Activated naive CD8-positive, alpha-beta T cell treated with anti-CD3 and anti-CD28 coated beads, Interleukin-2, amount 10 ng/mL, durations not matched to agents 7 days and 5 days (primary cell): ENCODE measurements at regions of chr10 and their contacts with region 1.

Region 1: GRCh38 chr10:6202684-6203330 is at the start of gene PFKFB3:
- DNase-seq: peak; percentile 98
- ATAC-seq: peak; percentile 63
- H3K4me3 Mint-ChIP-seq: peak within 1 kb of the TSS; percentile 100
- H3K27ac Mint-ChIP-seq: peak within 1 kb of the TSS; percentile 97
- H3K4me1 Mint-ChIP-seq: peaks cover 36% of the 10 kb centered on the region
- H3K27me3 Mint-ChIP-seq: no peaks in the 10 kb centered on the region
- total RNA-seq, gene PFKFB3: 75.1 to 77.2 TPM

Region 2: DNA sequence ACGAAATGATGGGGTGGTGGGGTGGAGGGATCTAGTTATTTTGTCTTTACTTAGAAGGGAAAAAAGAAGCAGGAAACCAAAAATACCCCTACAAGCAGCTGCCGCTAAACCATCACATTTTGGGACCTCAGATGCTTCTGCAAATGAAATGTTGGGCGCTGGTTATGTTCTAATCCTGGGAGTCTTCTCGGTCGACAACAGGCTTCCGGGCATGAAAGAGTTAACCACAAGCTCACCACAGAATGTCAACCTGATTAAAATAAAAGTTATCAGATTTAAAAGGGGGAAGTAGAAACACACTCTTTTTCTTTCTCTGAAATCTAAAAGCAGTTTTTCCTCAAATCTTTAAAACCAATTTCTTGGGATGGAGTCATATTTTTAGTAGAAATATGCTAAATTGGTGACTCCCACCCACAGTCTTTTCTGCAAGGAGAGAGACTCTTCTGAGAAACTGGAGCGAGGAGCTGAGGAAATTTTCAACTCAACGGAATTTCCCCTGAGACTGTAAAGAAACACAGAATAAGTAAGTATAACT is 157.4 kb before region 1 on chr10:
- POLR2A ChIA-PET with region 1: no interaction called
- DNase-seq: peak; percentile 35
- ATAC-seq: peak; percentile 32
- H3K4me3 Mint-ChIP-seq: peak overlapping the region; percentile 79
- H3K27ac Mint-ChIP-seq: peak overlapping the region; percentile 79
- H3K4me1 Mint-ChIP-seq: peaks cover 79% of the 10 kb centered on the region
- H3K27me3 Mint-ChIP-seq: no peaks in the 10 kb centered on the region

Region 3: GRCh38 chr10:6163364-6164270 is 39.2 kb before region 1 on chr10:
- POLR2A ChIA-PET with region 1: interaction called, 16 read pairs
- DNase-seq: peak; percentile 99
- ATAC-seq: peak; percentile 97
- H3K4me3 Mint-ChIP-seq: peak overlapping the region; percentile 93
- H3K27ac Mint-ChIP-seq: peak overlapping the region; percentile 92
- H3K4me1 Mint-ChIP-seq: peaks cover 34% of the 10 kb centered on the region
- H3K27me3 Mint-ChIP-seq: no peaks in the 10 kb centered on the region

Region 4: GRCh38 chr10:6171881-6172695 is 30.7 kb before region 1 on chr10:
- POLR2A ChIA-PET with region 1: interaction called, 32 read pairs
- DNase-seq: no peak
- ATAC-seq: no peak
- H3K4me3 Mint-ChIP-seq: peak overlapping the region; percentile 13
- H3K27ac Mint-ChIP-seq: peak overlapping the region; percentile 27
- H3K4me1 Mint-ChIP-seq: peaks cover 58% of the 10 kb centered on the region
- H3K27me3 Mint-ChIP-seq: no peaks in the 10 kb centered on the region

Region 5: DNA sequence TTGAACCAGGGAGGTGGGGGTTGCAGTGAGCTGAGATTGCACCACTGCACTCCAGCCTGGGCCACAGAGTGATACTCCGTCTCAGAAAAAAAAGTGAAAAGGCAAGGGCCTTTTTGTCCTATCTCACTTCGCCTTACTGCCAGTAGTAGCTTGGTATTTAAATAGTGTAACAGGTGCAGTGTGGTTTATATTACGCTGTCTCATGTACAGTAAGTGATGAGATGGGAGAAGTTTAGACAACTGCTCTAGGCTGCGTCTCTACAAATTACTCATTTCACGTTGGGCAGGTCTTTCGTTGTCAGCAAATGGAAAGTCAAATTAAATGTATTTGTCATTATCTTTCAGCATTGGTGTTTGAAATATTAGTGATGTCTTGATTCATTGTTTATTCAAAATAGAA is 15.5 kb before region 1 on chr10:
- POLR2A ChIA-PET with region 1: no interaction called
- DNase-seq: no peak
- ATAC-seq: no peak
- H3K4me3 Mint-ChIP-seq: no peak overlapping the region
- H3K27ac Mint-ChIP-seq: no peak overlapping the region
- H3K4me1 Mint-ChIP-seq: peaks cover 30% of the 10 kb centered on the region
- H3K27me3 Mint-ChIP-seq: no peaks in the 10 kb centered on the region

Region 6: GRCh38 chr10:6247041-6247712 is 44.4 kb after region 1 on chr10:
- POLR2A ChIA-PET with region 1: no interaction called
- DNase-seq: no peak
- ATAC-seq: no peak
- H3K4me3 Mint-ChIP-seq: no peak overlapping the region
- H3K27ac Mint-ChIP-seq: no peak overlapping the region
- H3K4me1 Mint-ChIP-seq: peaks cover 3% of the 10 kb centered on the region
- H3K27me3 Mint-ChIP-seq: no peaks in the 10 kb centered on the region

Region 7: GRCh38 chr10:6348096-6348874 is 145.5 kb after region 1 on chr10:
- POLR2A ChIA-PET with region 1: interaction called, 19 read pairs
- DNase-seq: peak; percentile 72
- ATAC-seq: peak; percentile 88
- H3K4me3 Mint-ChIP-seq: peak overlapping the region; percentile 82
- H3K27ac Mint-ChIP-seq: peak overlapping the region; percentile 98
- H3K4me1 Mint-ChIP-seq: peaks cover 54% of the 10 kb centered on the region
- H3K27me3 Mint-ChIP-seq: no peaks in the 10 kb centered on the region

Region 8: GRCh38 chr10:6401562-6402348 is 198.9 kb after region 1 on chr10:
- POLR2A ChIA-PET with region 1: interaction called, 38 read pairs
- DNase-seq: no peak
- ATAC-seq: peak; percentile 79
- H3K4me3 Mint-ChIP-seq: peak overlapping the region; percentile 55
- H3K27ac Mint-ChIP-seq: no peak overlapping the region
- H3K4me1 Mint-ChIP-seq: peaks cover 33% of the 10 kb centered on the region
- H3K27me3 Mint-ChIP-seq: peaks cover 7% of the 10 kb centered on the region

Region 9: DNA sequence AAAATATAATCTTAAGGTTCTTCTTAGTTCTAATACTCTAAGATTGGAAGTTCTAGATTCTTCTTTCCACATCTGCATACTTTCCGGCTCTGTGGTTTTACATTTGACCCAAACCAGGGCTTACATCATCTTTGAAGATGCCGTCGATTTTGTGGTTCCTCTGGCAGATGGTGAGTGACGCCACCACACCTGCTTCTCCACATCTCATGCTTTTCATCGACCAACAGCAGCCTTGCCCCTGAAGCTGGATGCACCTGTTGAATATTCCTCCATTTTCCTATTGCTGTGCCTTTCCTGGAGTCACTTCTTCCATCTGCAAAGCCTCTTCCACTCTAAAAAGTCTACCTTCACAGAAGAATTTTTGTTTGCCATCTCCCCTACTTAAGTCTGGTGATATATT is 256.0 kb after region 1 on chr10:
- POLR2A ChIA-PET with region 1: no interaction called
- DNase-seq: no peak
- ATAC-seq: no peak
- H3K4me3 Mint-ChIP-seq: no peak overlapping the region
- H3K27ac Mint-ChIP-seq: peak overlapping the region; percentile 74
- H3K4me1 Mint-ChIP-seq: peaks cover 34% of the 10 kb centered on the region
- H3K27me3 Mint-ChIP-seq: no peaks in the 10 kb centered on the region